ENCODE measurements at regions of chr6 and their contacts with region 1.

Region 1: DNA sequence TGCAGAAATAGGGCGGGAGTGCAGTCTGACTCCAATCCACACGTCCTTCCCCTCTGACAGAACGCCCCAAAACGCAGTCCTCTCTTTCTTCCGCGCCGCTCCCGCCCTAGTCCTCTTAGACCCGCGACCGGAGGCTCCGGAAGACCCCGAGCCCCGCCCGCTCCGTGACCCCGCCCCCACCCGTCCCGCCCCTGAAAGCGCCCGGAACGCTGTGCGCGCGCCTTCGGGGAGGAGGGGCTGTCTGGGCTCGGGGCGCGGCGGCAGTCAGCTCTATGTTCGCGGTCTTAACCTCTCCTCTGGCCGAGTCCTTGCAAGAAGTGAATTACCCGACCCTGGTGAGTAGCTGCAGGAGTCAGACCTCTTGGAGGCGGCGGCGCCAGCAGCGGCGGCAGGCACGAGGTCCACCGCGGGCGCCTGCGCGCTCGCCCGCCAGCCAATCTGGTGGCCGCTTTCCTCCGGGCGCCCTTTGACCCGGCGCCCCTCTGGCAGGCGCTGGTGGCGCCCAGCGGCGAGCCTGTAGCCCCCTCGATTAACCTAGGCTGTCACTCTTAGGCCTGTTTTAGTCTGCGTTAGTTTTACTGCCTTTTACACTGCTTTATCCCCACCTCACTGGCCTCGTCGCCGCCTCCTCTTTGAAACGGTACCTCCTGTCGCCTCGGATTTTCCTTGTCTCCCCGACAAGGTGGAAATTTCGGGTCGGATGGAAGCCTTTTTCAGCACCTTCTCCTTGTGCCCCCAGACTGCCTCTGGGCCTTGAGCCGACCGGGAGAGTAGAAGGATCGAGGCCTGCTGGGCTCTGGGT is at the start of gene MANEA:
- DNase-seq: peak; percentile 92
- H3K4me3 ChIP-seq: peak within 1 kb of the TSS; percentile 74
- H3K27ac ChIP-seq: peak within 1 kb of the TSS; percentile 86
- H3K4me1 ChIP-seq: peaks cover 35% of the 10 kb centered on the region
- H3K27me3 ChIP-seq: no peaks in the 10 kb centered on the region
- CTCF ChIP-seq: no peak
- total RNA-seq, gene MANEA: 14.6 and 19.2 TPM in 2 replicates

Region 2: GRCh38 chr6:95511404-95511803 is 66.1 kb before region 1 on chr6:
- CTCF ChIA-PET with region 1: no interaction called
- POLR2A ChIA-PET with region 1: no interaction called
- intact Hi-C with region 1: loop called (anchors 5 kb)
- DNase-seq: peak; percentile 85
- H3K4me3 ChIP-seq: no peak overlapping the region
- H3K27ac ChIP-seq: no peak overlapping the region
- H3K4me1 ChIP-seq: peaks cover 20% of the 10 kb centered on the region
- H3K27me3 ChIP-seq: no peaks in the 10 kb centered on the region
- CTCF ChIP-seq: no peak